ENCODE measurements at regions of chr9 and their contacts with region 1.

Region 1: GRCh38 chr9:109903515-109904138 is 123.6 kb downstream of the PALM2AKAP2 start:
- DNase-seq: no peak
- ATAC-seq: peak; percentile 64
- H3K4me3 ChIP-seq: no peak overlapping the region
- H3K27ac ChIP-seq: no peak overlapping the region
- H3K4me1 ChIP-seq: peaks cover 25% of the 10 kb centered on the region
- H3K27me3 ChIP-seq: no peaks in the 10 kb centered on the region
- CTCF ChIP-seq: peak; percentile 75 to 94 (median 91); a peak in 5 of 6 replicates
- EP300 ChIP-seq: no peak
- POLR2A ChIP-seq: no peak
- RAD21 ChIP-seq: peak; percentile 100

Region 2: DNA sequence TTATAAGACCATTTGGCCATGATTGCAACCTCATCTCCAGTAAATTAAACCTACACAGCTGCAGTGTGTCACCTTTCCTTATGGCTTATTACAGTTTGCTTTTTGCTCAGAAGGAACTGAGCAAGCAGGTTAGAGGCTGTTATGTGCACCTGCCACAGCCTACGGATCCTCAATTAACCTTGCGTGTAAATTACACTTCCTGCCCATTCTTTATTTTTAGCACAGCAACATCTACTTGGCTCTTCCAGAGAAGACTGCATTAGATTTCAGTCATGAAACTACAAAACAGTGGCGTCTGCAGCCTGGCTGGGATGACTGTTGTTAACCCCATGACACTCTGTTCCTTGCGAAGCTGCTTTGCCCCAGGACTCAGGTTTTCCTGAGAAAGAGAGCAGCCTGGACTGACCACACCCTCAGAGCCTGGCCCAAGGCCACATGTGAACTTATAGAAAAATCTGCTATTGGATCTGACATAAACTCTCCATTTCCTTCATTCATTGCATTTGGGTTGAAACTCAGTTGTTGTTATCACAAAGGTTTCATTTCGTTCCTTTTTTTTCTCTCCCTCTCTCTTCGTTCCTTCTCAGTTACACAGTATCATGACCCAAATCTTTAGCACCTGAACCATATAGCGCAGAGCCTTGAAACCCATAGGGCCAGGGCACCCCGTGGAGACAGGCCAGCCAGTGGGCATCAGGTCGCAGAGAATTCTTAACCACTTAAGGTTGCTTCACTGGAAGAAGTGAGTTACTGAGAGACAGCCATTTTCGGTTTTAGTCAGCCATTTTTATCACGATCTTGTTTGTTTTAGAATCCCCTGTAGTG is 14.9 kb after region 1 on chr9:
- CTCF ChIA-PET with region 1: interaction called, 23 read pairs
- POLR2A ChIA-PET with region 1: interaction called, 10 read pairs
- RAD21 ChIA-PET with region 1: interaction called, 32 read pairs
- SMC1A ChIA-PET with region 1: interaction called, 24 read pairs
- in situ Hi-C with region 1: no loop called
- intact Hi-C with region 1: no loop called
- DNase-seq: peak; percentile 80
- ATAC-seq: peak; percentile 73
- H3K4me3 ChIP-seq: peak overlapping the region; percentile 37; the same call in 1 of the 2 replicates
- H3K27ac ChIP-seq: peak overlapping the region; percentile 94
- H3K4me1 ChIP-seq: peaks cover 55% of the 10 kb centered on the region
- H3K27me3 ChIP-seq: no peaks in the 10 kb centered on the region
- CTCF ChIP-seq: no peak
- EP300 ChIP-seq: peak; percentile 71 to 92
- POLR2A ChIP-seq: no peak; the same call in none of the 2 replicates
- RAD21 ChIP-seq: peak; percentile 38; the same call in 1 of the 2 replicates

Region 3: GRCh38 chr9:109953813-109954497 is 50.3 kb after region 1 on chr9:
- CTCF ChIA-PET with region 1: interaction called, 8 read pairs
- POLR2A ChIA-PET with region 1: no interaction called
- RAD21 ChIA-PET with region 1: interaction called, 9 read pairs
- SMC1A ChIA-PET with region 1: interaction called, 12 read pairs
- in situ Hi-C with region 1: no loop called
- intact Hi-C with region 1: no loop called
- DNase-seq: no peak
- ATAC-seq: no peak
- H3K4me3 ChIP-seq: no peak overlapping the region
- H3K27ac ChIP-seq: no peak overlapping the region
- H3K4me1 ChIP-seq: peaks cover 29% of the 10 kb centered on the region
- H3K27me3 ChIP-seq: no peaks in the 10 kb centered on the region
- CTCF ChIP-seq: 0 out of 6 replicates have a peak, but pooled peaks of 1 of the 3 experiments have one; percentile 18
- EP300 ChIP-seq: no peak
- POLR2A ChIP-seq: no peak
- RAD21 ChIP-seq: 0 out of 2 replicates have a peak, but pooled peaks have one; percentile 5

Region 4: GRCh38 chr9:110048403-110048975 is 144.9 kb after region 1 on chr9:
- CTCF ChIA-PET with region 1: interaction called, 537 read pairs
- POLR2A ChIA-PET with region 1: interaction called, 15 read pairs
- RAD21 ChIA-PET with region 1: interaction called, 309 read pairs
- SMC1A ChIA-PET with region 1: interaction called, 636 read pairs
- in situ Hi-C with region 1: no loop called
- intact Hi-C with region 1: no loop called
- DNase-seq: peak; percentile 56
- ATAC-seq: peak; percentile 90
- H3K4me3 ChIP-seq: peak overlapping the region; percentile 100
- H3K27ac ChIP-seq: peak overlapping the region; percentile 87
- H3K4me1 ChIP-seq: 0 out of 2 replicates have a peak, but pooled peaks cover 4% of the 10 kb centered on the region
- H3K27me3 ChIP-seq: no peaks in the 10 kb centered on the region; a peak in 1 of 4 replicates
- CTCF ChIP-seq: no peak
- EP300 ChIP-seq: no peak
- POLR2A ChIP-seq: peak; percentile 88
- RAD21 ChIP-seq: no peak

Region 5: DNA sequence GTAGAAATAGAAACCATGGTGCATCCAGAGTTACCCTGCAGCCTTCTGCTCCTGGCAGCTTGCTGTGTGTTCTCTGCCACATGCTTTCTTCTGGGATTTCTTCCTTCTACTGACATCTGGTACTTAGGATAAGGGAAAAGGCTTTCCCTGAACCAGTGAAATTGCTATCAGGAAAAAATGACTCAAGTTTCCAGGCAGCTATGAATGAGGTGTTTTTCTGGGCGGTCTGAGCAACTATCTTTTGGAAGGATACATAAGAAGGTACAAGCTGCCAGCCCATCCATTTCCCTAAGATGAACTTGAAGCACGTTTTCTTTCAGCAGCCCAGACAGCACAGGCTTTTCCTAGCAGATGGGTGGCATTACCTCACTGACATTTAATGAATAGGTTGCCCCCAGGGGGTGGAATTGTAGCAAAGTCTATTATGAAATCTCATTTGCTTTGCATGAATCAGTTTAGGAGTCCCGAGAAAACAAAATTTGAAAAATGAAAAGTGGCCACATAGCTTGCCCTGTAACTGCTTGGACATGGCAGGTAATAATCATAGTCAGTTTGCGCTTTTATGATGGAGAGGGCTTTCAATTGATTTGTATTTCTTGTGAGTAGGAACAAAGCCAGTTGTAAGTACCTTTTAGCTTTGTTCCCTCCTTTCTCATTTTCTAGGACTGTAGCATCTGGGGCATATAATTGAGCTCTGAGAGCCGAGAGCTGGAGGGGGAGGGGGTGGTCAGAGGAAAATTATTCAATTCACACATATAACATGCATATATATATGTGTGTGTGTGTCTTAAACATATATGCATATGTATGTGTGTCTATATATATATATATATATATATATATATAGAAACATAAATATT is 195.8 kb after region 1 on chr9:
- CTCF ChIA-PET with region 1: interaction called, 7 read pairs
- POLR2A ChIA-PET with region 1: interaction called, 3 read pairs
- RAD21 ChIA-PET with region 1: interaction called, 16 read pairs
- SMC1A ChIA-PET with region 1: interaction called, 58 read pairs
- in situ Hi-C with region 1: no loop called
- intact Hi-C with region 1: no loop called
- DNase-seq: no peak
- ATAC-seq: no peak
- H3K4me3 ChIP-seq: no peak overlapping the region
- H3K27ac ChIP-seq: no peak overlapping the region
- H3K4me1 ChIP-seq: peaks cover 42% of the 10 kb centered on the region
- H3K27me3 ChIP-seq: no peaks in the 10 kb centered on the region
- CTCF ChIP-seq: no peak
- EP300 ChIP-seq: no peak
- POLR2A ChIP-seq: no peak
- RAD21 ChIP-seq: no peak

Region 6: GRCh38 chr9:110143950-110144545 is 240.4 kb after region 1 on chr9:
- CTCF ChIA-PET with region 1: interaction called, 597 read pairs
- POLR2A ChIA-PET with region 1: interaction called, 21 read pairs
- RAD21 ChIA-PET with region 1: interaction called, 424 read pairs
- SMC1A ChIA-PET with region 1: interaction called, 406 read pairs
- in situ Hi-C with region 1: no loop called
- intact Hi-C with region 1: no loop called
- DNase-seq: no peak
- ATAC-seq: peak; percentile 79
- H3K4me3 ChIP-seq: peak overlapping the region; percentile 37; the same call in 1 of the 2 replicates
- H3K27ac ChIP-seq: peak overlapping the region; percentile 81
- H3K4me1 ChIP-seq: peaks cover 61% of the 10 kb centered on the region
- H3K27me3 ChIP-seq: no peaks in the 10 kb centered on the region
- CTCF ChIP-seq: peak in 2 of 3 experiments; percentile 16 to 21; a peak in 1 of 6 replicates
- EP300 ChIP-seq: no peak
- POLR2A ChIP-seq: peak; percentile 48; the same call in 1 of the 2 replicates
- RAD21 ChIP-seq: no peak

Region 7: GRCh38 chr9:110183208-110184145 is 279.9 kb after region 1 on chr9:
- CTCF ChIA-PET with region 1: interaction called, 24 read pairs
- POLR2A ChIA-PET with region 1: no interaction called
- RAD21 ChIA-PET with region 1: interaction called, 17 read pairs
- SMC1A ChIA-PET with region 1: interaction called, 12 read pairs
- in situ Hi-C with region 1: no loop called
- intact Hi-C with region 1: no loop called
- DNase-seq: peak; percentile 25
- ATAC-seq: peak; percentile 91
- H3K4me3 ChIP-seq: no peak overlapping the region
- H3K27ac ChIP-seq: no peak overlapping the region
- H3K4me1 ChIP-seq: no peaks in the 10 kb centered on the region
- H3K27me3 ChIP-seq: no peaks in the 10 kb centered on the region
- CTCF ChIP-seq: peak; percentile 75 to 79 (median 76); a peak in 5 of 6 replicates
- EP300 ChIP-seq: no peak
- POLR2A ChIP-seq: no peak
- RAD21 ChIP-seq: peak; percentile 91

Measured in GM12878 (cell line).